ENCODE measurements at regions of chr6 and their contacts with region 1.

Region 1: DNA sequence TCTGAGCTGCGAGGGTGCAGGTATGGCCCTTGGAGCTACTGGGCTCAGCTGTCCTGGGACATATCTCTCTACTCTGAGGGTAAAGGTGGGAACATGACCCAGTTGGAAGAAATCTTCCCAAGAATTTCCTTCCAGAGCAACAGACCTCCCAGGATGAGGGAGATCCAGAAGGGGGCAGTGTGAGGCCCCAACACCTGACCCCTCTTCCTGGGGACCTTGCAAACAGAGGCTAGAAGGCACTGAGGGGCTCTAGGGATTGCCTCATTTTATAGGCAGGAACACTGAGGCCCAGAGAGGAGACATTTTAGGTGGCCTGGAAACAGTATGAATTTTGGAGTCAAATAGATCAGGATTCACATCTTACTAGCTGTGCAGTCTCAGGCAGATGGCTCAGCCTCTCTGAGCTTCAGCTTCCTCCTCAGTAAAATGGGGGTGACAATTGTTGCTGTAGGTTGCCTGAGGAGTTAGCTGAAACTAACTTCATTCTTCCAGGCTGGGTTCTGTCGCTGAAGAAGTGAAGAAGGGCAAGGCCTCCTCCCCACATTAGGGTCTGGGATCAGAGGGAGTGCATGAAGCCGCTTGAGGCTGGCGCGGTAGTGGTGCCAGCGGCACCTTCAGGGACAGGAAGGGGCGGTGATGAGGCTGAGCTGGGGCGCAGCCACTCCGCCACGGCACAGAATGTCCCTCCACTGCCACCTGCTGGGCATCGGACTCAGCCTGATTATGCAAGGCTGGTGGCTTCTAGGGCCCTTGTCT is 11.4 kb downstream of the KCNK17 start:
- DNase-seq: peak; percentile 94
- H3K4me3 Mint-ChIP-seq: peak overlapping the region; percentile 42
- H3K27ac Mint-ChIP-seq: peak overlapping the region; percentile 21
- H3K4me1 Mint-ChIP-seq: peaks cover 6% of the 10 kb centered on the region
- H3K27me3 Mint-ChIP-seq: no peaks in the 10 kb centered on the region

Region 2: GRCh38 chr6:38871741-38872568 is 430.9 kb before region 1 on chr6:
- CTCF ChIA-PET with region 1: interaction called, 11 read pairs
- DNase-seq: peak; percentile 67
- H3K4me3 Mint-ChIP-seq: no peak overlapping the region
- H3K27ac Mint-ChIP-seq: no peak overlapping the region
- H3K4me1 Mint-ChIP-seq: peaks cover 21% of the 10 kb centered on the region
- H3K27me3 Mint-ChIP-seq: no peaks in the 10 kb centered on the region

Region 3: GRCh38 chr6:38997128-38997761 is 305.6 kb before region 1 on chr6:
- CTCF ChIA-PET with region 1: interaction called, 16 read pairs
- DNase-seq: peak; percentile 48
- H3K4me3 Mint-ChIP-seq: no peak overlapping the region
- H3K27ac Mint-ChIP-seq: no peak overlapping the region
- H3K4me1 Mint-ChIP-seq: no peaks in the 10 kb centered on the region
- H3K27me3 Mint-ChIP-seq: peaks cover 32% of the 10 kb centered on the region

Region 4: DNA sequence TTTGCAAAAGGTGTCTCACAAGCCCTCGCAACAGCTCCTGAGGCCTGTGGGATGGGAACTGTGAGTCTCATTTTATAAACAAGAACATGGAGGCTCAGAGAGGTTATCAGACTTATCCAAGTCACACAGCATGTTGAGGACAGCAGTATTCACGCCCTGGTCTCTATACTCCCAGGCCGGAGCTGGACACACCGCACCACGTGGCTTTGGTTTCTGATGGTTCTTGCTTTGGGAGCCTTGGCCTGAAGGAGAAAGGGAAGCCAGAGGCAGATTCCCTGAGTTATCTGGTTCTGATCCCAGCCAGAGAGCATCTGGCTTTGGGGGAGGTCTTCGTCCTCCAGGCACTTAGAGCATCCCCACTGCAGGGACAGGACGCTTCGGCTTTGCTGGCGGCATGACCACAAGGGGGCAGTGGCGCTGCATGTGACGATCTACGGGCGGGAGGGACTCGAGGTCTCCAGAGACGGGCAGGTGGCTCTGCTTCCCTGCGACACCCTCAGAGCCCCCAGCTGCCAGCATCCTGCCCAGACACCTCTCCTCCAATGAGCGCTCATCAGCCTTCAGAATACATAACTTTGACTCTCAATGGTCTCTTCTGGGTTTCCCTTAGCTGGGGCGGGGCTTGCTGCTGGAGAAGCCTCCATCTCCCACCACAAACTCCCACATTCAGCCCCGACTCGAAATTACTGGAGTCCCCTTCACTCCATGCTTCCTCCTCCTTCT is 136.5 kb before region 1 on chr6:
- CTCF ChIA-PET with region 1: interaction called, 410 read pairs
- DNase-seq: peak; percentile 89
- H3K4me3 Mint-ChIP-seq: no peak overlapping the region
- H3K27ac Mint-ChIP-seq: no peak overlapping the region
- H3K4me1 Mint-ChIP-seq: no peaks in the 10 kb centered on the region
- H3K27me3 Mint-ChIP-seq: peaks cover 27% of the 10 kb centered on the region

Region 5: DNA sequence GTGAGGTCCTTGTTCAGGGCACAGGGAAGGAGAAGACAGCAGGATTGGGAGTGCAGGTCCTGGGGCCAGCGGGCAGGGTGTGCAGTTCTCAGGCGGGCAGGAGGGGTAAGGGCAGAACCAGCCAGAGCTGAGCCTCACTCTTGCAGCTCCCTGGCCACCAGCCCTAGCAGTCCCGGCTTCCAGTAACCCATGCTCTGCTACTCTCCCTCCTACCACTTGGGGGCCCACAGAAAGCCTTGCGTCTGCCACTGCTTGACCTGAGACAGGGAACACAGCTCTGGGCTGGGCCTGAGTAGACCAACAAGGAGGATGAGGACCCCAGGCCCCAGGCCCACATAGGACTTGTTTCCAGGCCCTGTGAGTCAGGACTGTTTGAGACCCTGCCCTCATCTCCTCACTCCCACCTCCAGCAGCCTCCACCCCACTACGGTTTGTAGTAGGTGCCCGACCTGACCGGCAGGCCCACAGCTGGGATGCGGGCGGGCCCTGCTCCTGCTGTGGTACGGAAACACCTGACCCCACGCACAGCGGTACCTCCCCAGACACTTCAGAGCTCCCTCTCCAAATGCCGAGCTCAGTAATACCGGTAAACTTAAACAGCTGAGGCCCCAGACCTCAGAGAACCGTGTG is 112.8 kb before region 1 on chr6:
- CTCF ChIA-PET with region 1: interaction called, 24 read pairs
- DNase-seq: no peak
- H3K4me3 Mint-ChIP-seq: no peak overlapping the region
- H3K27ac Mint-ChIP-seq: no peak overlapping the region
- H3K4me1 Mint-ChIP-seq: peaks cover 14% of the 10 kb centered on the region
- H3K27me3 Mint-ChIP-seq: no peaks in the 10 kb centered on the region

Region 6: GRCh38 chr6:39228992-39229767 is 73.7 kb before region 1 on chr6 and contains the start of gene KCNK5:
- CTCF ChIA-PET with region 1: interaction called, 19 read pairs
- DNase-seq: peak; percentile 89
- H3K4me3 Mint-ChIP-seq: peak within 1 kb of the TSS; percentile 78
- H3K27ac Mint-ChIP-seq: peak within 1 kb of the TSS; percentile 28
- H3K4me1 Mint-ChIP-seq: peaks cover 57% of the 10 kb centered on the region
- H3K27me3 Mint-ChIP-seq: peaks cover 35% of the 10 kb centered on the region

Region 7: DNA sequence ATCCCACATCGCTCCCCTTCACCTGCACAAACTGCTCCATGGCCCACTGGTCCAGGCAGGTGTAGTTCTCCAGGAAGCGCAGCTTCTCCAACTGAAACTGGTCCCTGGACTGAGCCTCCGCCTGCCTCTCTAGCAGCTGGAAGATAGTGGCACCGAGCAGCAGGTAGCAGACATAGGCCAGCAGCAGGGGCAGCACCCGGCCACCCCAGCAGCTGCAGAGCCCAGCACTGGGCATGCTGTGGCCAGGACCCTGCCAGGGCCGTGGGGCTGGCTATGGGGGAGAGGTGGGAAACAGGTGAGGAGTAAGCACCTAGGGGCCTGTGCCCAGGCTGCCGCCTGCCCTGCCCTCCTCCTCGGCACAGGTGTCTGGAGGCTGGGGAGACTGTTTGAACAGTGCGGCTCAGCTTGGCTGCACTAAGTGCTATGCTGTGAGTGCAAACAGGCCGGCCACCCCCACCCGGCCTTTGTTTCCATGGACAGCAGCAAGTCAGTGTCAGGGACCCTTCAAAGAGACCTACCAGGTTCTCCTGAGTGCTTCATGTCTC is 19.5 kb after region 1 on chr6 and contains the start of gene KCNK16:
- CTCF ChIA-PET with region 1: no interaction called
- DNase-seq: no peak
- H3K4me3 Mint-ChIP-seq: no peak within 1 kb of the TSS
- H3K27ac Mint-ChIP-seq: no peak within 1 kb of the TSS
- H3K4me1 Mint-ChIP-seq: no peaks in the 10 kb centered on the region
- H3K27me3 Mint-ChIP-seq: peaks cover 56% of the 10 kb centered on the region

Region 8: GRCh38 chr6:39347906-39348585 is 45.2 kb after region 1 on chr6:
- CTCF ChIA-PET with region 1: no interaction called
- DNase-seq: peak; percentile 70
- H3K4me3 Mint-ChIP-seq: no peak overlapping the region
- H3K27ac Mint-ChIP-seq: no peak overlapping the region
- H3K4me1 Mint-ChIP-seq: peaks cover 2% of the 10 kb centered on the region
- H3K27me3 Mint-ChIP-seq: peaks cover 6% of the 10 kb centered on the region

Measured in activated naive CD4-positive, alpha-beta T cell treated with anti-CD3 and anti-CD28 coated beads, Interleukin-2, amount 10 ng/mL, durations not matched to agents 7 days and 5 days (primary cell).